Mammary epithelial cell (primary cell): ENCODE measurements at regions of chr1 and their contacts with region 1.

Region 1: GRCh38 chr1:94055459-94056122 is 65.4 kb downstream of the ABCA4 start:
- DNase-seq: peak; percentile 39
- H3K4me3 ChIP-seq: no peak overlapping the region
- H3K27ac ChIP-seq: no peak overlapping the region
- H3K4me1 ChIP-seq: peaks cover 21% of the 10 kb centered on the region
- H3K27me3 ChIP-seq: no peaks in the 10 kb centered on the region
- CTCF ChIP-seq: no peak

Region 2: DNA sequence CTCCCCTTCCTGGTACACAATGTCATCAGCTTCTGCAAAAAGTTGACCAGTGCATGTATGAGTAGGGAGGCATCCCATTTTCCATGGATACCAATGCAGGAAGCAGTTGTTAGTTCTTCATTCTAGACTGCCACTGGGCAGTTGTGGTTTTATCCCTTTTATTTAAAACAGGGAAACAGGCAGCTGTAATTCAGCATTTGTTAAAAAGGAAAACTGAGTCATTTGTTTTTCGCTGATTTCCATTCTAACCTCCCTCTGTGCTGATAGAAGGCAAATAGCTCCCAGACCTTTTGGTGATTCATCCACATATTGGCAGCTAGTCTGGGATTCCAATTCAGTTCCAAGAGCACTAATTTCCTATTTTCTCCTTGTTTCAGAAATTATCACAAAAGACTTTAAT is 86.4 kb after region 1 on chr1:
- CTCF ChIA-PET with region 1: no interaction called
- dilution Hi-C with region 1: loop called (anchors 5 kb)
- in situ Hi-C with region 1: no loop called
- intact Hi-C with region 1: no loop called
- DNase-seq: no peak
- H3K4me3 ChIP-seq: no peak overlapping the region
- H3K27ac ChIP-seq: no peak overlapping the region
- H3K4me1 ChIP-seq: no peaks in the 10 kb centered on the region
- H3K27me3 ChIP-seq: no peaks in the 10 kb centered on the region
- CTCF ChIP-seq: no peak

Region 3: GRCh38 chr1:94936861-94937620 is 881.5 kb after region 1 on chr1:
- CTCF ChIA-PET with region 1: no interaction called
- dilution Hi-C with region 1: no loop called
- in situ Hi-C with region 1: no loop called
- intact Hi-C with region 1: no loop called
- DNase-seq: no peak
- H3K4me3 ChIP-seq: no peak overlapping the region
- H3K27ac ChIP-seq: no peak overlapping the region
- H3K4me1 ChIP-seq: no peaks in the 10 kb centered on the region
- H3K27me3 ChIP-seq: no peaks in the 10 kb centered on the region
- CTCF ChIP-seq: no peak